ENCODE measurements at regions of chr1 and their contacts with region 1.

Region 1: DNA sequence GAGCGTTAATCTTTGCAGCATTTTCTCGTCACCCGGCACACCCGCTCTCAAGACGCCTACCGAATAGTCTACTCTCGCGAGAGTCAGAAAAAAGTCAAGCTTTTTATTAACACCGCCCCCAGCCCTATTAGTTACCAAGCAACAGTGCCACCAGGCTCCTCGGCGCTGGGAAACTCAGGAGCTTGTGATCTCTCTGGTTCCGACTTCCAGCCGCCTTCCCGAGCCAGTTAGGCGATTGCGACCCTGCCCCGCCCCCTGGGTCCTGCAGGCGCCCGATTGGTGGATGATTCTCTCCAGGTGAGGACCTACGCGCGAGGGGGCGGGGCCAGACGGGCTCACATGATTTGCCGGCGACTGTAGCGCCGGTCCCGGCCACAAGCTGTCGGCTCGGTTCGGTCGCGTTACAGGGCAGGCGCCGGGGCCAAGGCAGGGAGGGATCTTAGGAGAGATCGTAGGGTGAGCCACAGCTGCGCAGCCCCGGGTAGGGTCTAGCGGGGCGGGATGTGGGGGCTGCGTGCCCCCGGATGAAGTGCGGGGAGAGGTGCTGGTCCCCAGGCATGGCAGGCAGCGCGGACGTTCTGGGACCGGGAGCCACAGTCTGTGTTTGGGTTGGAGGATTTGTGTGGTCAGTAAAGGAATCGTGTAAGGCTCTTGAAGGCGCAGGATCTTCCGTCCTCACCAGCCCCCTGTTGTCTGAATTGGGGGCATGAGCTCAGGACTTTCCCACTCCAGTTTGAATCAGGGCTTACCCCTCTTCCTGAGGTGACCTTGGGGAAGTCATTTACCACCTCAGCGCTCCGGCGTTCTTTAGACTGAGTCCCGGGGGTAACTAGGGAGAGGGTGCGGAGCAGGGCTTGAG is at the start of gene PFKFB2:
- DNase-seq: peak; percentile 92
- H3K4me3 ChIP-seq: peak within 1 kb of the TSS; percentile 95
- H3K27ac ChIP-seq: peak within 1 kb of the TSS; percentile 78
- H3K4me1 ChIP-seq: peaks cover 76% of the 10 kb centered on the region
- CTCF ChIP-seq: 0 out of 2 replicates have a peak, but pooled peaks have one; percentile 16
- total RNA-seq, gene PFKFB2: 8.8 and 9.8 TPM in 2 replicates

Region 2: DNA sequence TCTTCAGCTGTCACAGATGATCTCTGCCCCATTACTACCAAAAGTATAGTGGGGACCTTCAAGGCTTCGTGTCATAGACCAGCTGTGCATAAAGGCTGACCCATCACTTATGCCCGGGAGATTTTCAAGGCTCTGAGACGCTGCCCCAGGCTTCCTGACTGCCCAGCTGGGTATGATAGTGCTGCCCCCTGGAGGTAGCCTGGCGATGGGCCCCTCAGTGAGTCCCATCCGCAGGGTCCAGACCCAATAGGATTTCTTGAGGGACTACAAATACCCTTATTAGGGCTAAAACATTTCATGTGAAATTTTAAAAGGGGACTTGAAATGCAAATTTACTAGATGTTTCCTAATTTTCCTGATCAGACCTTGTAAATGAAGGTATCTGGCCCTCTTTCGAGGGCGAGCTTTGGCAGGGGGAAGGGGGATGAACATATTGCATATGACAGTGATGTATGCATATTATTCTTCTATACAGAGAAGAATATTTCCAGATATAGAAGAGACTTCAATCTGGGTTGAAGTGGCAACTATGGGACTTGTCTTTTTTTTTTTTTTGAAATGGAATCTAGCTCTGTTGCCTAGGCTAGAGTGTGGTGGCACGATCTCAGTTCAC is 119.7 kb before region 1 on chr1:
- CTCF ChIA-PET with region 1: no interaction called
- POLR2A ChIA-PET with region 1: no interaction called
- intact Hi-C with region 1: loop called (anchors 5 kb)
- DNase-seq: peak; percentile 66
- H3K4me3 ChIP-seq: no peak overlapping the region
- H3K27ac ChIP-seq: no peak overlapping the region
- H3K4me1 ChIP-seq: peaks cover 17% of the 10 kb centered on the region
- CTCF ChIP-seq: peak; percentile 90

Region 3: DNA sequence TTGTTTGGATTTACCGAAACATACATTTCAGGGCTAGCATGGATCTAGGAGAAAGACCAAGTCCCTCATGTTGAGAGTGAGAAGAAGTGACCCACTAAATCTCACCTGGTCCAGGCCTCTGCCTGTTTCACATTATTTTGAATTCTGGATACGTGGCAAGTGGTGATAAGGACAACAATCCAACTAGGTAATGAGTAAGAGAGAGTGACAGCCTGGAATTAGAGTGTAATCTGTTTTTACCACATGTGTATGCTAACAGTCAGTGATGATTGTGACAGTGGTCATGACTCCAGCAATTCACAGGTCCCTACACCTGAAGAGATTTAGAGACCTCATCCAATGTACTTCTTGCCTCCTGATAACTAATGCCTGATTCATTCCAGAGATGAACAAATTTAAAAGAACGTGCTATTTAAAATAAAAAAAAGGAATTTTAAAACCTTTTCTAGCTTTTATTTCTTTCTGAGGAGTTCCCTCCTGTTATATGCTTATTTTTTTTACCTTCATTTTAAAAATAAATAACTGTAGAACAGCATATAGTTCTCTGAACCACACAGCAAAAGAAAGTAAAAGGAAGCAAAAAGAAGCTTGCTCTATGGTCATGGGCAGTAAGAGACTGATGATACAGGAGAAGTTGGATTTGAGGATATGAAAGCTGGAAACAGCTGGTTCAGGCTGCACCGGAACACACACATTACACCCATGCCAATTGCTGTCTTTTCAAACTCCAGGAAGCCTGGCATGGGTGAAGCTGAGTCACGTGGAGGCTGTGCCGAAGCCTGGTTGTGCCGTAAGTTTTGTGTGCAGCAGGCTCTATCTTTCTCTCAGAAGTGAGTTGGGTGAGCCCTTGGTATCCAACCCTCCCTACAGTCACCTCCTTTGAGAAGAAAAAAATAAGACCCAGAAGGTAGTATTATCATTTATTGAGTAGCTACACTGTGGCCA is 35.3 kb before region 1 on chr1:
- CTCF ChIA-PET with region 1: no interaction called
- POLR2A ChIA-PET with region 1: no interaction called
- intact Hi-C with region 1: no loop called
- DNase-seq: no peak
- H3K4me3 ChIP-seq: no peak overlapping the region
- H3K27ac ChIP-seq: no peak overlapping the region
- H3K4me1 ChIP-seq: no peaks in the 10 kb centered on the region
- CTCF ChIP-seq: no peak

Region 4: GRCh38 chr1:207077470-207078377 is 24.6 kb after region 1 on chr1:
- CTCF ChIA-PET with region 1: interaction called, 3 read pairs
- POLR2A ChIA-PET with region 1: interaction called, 6 read pairs
- intact Hi-C with region 1: loop called (anchors 1 kb)
- DNase-seq: peak; percentile 75
- H3K4me3 ChIP-seq: no peak overlapping the region
- H3K27ac ChIP-seq: no peak overlapping the region
- H3K4me1 ChIP-seq: no peaks in the 10 kb centered on the region
- CTCF ChIP-seq: peak; percentile 93

Region 5: DNA sequence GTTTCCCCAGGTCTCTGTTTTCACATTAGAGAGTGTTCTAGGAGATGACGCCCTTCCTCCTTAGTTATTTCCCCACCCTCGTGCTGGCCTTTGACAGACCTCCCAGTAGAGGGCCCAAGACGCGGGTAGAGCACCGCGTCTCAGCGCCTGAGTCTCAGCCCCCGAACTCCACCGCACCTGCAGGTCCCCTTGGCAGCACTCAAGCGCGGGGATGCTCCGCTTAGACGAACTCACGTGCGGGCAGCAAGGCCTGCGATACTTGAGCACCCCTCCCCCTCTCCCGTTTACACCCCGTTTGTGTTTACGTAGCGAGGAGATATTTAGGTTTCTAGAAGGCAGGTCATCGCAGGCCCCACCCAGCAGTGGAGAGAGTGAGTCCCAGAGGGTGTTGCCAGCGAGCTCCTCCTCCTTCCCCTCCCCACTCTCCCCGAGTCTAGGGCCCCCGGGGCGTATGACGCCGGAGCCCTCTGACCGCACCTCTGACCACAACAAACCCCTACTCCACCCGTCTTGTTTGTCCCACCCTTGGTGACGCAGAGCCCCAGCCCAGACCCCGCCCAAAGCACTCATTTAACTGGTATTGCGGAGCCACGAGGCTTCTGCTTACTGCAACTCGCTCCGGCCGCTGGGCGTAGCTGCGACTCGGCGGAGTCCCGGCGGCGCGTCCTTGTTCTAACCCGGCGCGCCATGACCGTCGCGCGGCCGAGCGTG is 268.1 kb after region 1 on chr1 and contains the start of gene CD55:
- CTCF ChIA-PET with region 1: interaction called, 3 read pairs
- POLR2A ChIA-PET with region 1: interaction called, 3 read pairs
- intact Hi-C with region 1: loop called (anchors 5 kb)
- DNase-seq: peak; percentile 96
- H3K4me3 ChIP-seq: peak within 1 kb of the TSS; percentile 87
- H3K27ac ChIP-seq: peak within 1 kb of the TSS; percentile 73
- H3K4me1 ChIP-seq: peaks cover 20% of the 10 kb centered on the region
- CTCF ChIP-seq: peak; percentile 67; the same call in 1 of the 2 replicates
- total RNA-seq, gene CD55: 18.8 and 28.1 TPM in 2 replicates

Region 6: GRCh38 chr1:207346562-207346912 is 293.4 kb after region 1 on chr1:
- CTCF ChIA-PET with region 1: no interaction called
- POLR2A ChIA-PET with region 1: no interaction called
- intact Hi-C with region 1: no loop called
- DNase-seq: no peak
- H3K4me3 ChIP-seq: no peak overlapping the region
- H3K27ac ChIP-seq: no peak overlapping the region
- H3K4me1 ChIP-seq: no peaks in the 10 kb centered on the region
- CTCF ChIP-seq: no peak

Measured in OCI-LY7 (cell line).